Heart left ventricle (tissue), 16 donors: ENCODE measurements at regions of chr9 and their contacts with region 1.

Region 1: GRCh38 chr9:115022760-115023434 is 92.5 kb upstream of the TNFSF8 start:
- DNase-seq: no peak
- ATAC-seq: no peak
- H3K4me3 ChIP-seq: no peak overlapping the region
- H3K27ac ChIP-seq: peak overlapping the region in 1 of 12 donors; percentile 67
- H3K4me1 ChIP-seq: no peaks in the 10 kb centered on the region
- H3K27me3 ChIP-seq: peaks cover 0 to 3% (median 0%) of the 10 kb centered on the region in 9 donors
- CTCF ChIP-seq: no peak
- POLR2A ChIP-seq: no peak

Region 2: DNA sequence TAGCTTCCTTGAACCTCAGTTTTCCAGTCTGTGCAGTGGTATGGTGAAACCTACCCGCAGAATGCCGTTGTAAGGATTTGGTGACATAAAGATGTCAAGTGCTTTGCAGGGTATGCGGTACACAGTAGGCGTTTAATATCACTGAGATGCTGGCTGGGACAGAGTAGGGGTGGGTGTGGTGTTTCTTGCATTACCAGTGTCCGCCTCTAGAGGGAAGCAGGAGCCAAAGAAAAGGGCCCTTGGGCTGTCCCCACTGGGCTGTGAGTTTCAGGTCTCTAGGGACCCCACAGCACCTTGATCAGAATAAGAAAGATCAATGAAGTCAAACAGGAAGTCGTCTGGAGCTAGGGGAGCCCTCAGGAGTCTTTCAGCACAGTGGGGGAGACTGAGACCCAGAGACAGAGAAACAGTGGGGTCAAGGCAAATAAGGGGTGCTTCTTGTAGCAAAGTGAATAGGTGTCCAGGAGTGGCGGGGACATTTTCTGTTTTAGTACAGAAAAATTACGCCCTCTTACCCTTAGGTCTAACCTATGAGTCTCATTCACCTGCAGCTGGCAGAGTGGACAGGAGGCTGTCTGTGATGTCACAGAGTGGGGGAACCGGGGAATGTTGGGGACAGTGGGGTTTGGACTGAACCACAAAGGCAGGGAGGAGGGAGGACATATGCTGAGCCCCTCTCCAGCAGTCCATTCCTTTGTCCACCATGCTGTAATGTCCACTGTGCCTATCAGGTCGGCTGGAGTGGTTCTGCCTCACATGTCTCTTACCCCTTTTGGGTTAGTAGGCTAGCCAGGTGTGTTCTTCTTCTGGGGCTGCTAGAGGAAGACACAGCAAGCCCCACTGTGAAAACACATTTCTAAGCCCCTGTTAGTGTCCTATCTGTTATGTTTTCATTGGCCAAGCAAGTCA is 360.6 kb before region 1 on chr9:
- intact Hi-C with region 1: loop called in 2 of 10 experiments (anchors 10 kb)
- DNase-seq: peak in 2 of 5 donors; percentile 16 to 26
- ATAC-seq: peak in 3 of 4 donors; percentile 54 to 69 (median 67)
- H3K4me3 ChIP-seq: no peak overlapping the region
- H3K27ac ChIP-seq: no peak overlapping the region
- H3K4me1 ChIP-seq: no peaks in the 10 kb centered on the region
- H3K27me3 ChIP-seq: peaks cover 0 to 24% (median 6%) of the 10 kb centered on the region in 9 donors
- CTCF ChIP-seq: peak; percentile 52 to 77 (median 70)
- POLR2A ChIP-seq: no peak

Region 3: DNA sequence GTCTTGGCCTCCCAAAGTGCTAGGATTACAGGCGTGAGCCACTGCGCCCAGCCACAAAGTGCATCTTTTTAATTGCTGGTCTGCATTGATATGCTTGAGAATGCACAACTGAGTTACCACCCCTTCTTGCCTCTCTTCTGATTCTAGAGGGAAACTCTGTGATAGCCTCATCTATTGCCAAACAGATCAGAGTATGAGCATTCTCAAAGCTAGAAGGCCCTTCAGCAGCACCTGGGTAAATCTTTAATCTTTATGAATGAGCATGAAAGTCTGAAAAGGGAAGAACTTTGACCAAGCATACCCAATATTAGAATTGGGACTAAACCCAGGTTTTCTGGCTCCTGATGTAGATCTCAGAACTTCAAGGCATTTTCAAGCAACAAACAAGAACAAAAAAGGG is 393.4 kb after region 1 on chr9:
- intact Hi-C with region 1: no loop called
- DNase-seq: no peak
- ATAC-seq: no peak
- H3K4me3 ChIP-seq: no peak overlapping the region
- H3K27ac ChIP-seq: no peak overlapping the region
- H3K4me1 ChIP-seq: peaks cover 0 to 3% (median 0%) of the 10 kb centered on the region in 12 donors
- H3K27me3 ChIP-seq: no peaks in the 10 kb centered on the region
- CTCF ChIP-seq: no peak
- POLR2A ChIP-seq: no peak